HepG2 (cell line): ENCODE measurements at regions of chr12 and their contacts with region 1.

Region 1: GRCh38 chr12:92408072-92408900 is 262.6 kb upstream of the BTG1 start:
- DNase-seq: peak; percentile 4
- ATAC-seq: peak; percentile 81
- H3K4me3 ChIP-seq: no peak overlapping the region
- H3K27ac ChIP-seq: no peak overlapping the region
- H3K4me1 ChIP-seq: no peaks in the 10 kb centered on the region
- H3K27me3 ChIP-seq: no peaks in the 10 kb centered on the region
- CTCF ChIP-seq: peak; percentile 70
- EP300 ChIP-seq: no peak
- POLR2A ChIP-seq: no peak
- RAD21 ChIP-seq: no peak

Region 2: GRCh38 chr12:91811481-91812287 is 596.6 kb before region 1 on chr12:
- CTCF ChIA-PET with region 1: no interaction called
- POLR2A ChIA-PET with region 1: no interaction called
- in situ Hi-C with region 1: no loop called
- intact Hi-C with region 1: loop called (anchors 1 kb)
- DNase-seq: peak; percentile 42
- ATAC-seq: peak; percentile 58
- H3K4me3 ChIP-seq: no peak overlapping the region
- H3K27ac ChIP-seq: no peak overlapping the region
- H3K4me1 ChIP-seq: no peaks in the 10 kb centered on the region
- H3K27me3 ChIP-seq: no peaks in the 10 kb centered on the region
- CTCF ChIP-seq: peak; percentile 64
- EP300 ChIP-seq: no peak
- POLR2A ChIP-seq: no peak
- RAD21 ChIP-seq: 0 out of 2 replicates have a peak, but pooled peaks have one; percentile 34